Naive thymus-derived CD4-positive, alpha-beta T cell (primary cell): ENCODE measurements at regions of chr5 and their contacts with region 1.

Region 1: DNA sequence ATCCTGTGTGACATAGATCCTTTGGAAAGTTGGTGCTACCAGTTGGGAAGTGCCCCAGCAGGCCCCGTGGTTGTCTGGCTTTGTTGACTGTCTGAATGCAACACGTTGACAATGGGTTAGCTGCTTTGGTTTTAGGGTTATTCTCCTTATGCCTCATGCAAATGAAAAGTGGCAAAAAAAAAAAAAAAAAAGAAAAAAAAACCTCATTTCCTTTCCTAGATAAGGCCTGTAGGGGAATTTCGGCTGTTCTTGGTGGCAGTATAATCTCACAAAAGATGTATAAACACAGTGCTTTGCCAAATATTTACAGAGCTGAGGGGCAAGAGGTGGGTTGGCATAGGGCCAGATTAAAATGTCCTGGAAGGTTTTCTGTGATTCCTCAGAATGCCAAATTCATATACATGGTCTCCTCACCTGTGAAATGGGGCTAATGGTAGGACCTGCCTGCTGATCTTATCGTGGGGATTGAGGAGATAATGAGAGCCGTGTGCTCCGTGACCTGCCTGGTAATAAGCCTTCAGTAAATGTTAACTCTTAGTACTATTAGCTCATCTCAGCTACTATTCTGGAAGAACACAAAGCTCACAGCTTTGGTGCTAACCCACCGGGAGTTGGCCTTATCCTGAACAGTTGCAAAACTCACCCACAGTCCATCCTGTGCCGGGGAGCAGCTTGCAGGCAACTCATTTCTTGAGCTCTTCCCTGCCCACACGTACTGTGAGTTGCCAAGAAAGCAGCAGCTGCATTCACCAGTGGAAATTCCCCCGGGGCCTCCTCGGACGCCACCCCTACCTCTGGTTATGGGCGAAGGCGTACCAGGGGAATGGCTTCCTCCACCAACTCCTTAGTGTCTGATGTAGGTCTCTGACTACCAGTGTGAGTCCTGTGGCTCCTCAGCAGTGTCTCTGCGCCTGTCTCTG is 220.3 kb downstream of the NR3C1 start:
- DNase-seq: peak in 1 of 9 donors; percentile 80
- ATAC-seq: peak; percentile 61
- H3K4me3 ChIP-seq: no peak overlapping the region
- H3K4me3 Mint-ChIP-seq: peak overlapping the region in 1 of 10 donors; percentile 66
- H3K27ac ChIP-seq: no peak overlapping the region
- H3K27ac Mint-ChIP-seq: peak overlapping the region in 1 of 9 donors; percentile 89
- H3K4me1 ChIP-seq: peaks cover 3 to 22% of the 10 kb centered on the region in 2 donors
- H3K4me1 Mint-ChIP-seq: peaks cover 6 to 65% (median 16%) of the 10 kb centered on the region in 7 donors
- H3K27me3 ChIP-seq: no peaks in the 10 kb centered on the region
- H3K27me3 Mint-ChIP-seq: no peaks in the 10 kb centered on the region

Region 2: GRCh38 chr5:143222287-143223231 is 39.4 kb after region 1 on chr5:
- CTCF ChIA-PET with region 1: no interaction called
- POLR2A ChIA-PET with region 1: no interaction called
- intact Hi-C with region 1: loop called in 1 of 2 experiments (anchors 1 kb)
- DNase-seq: peak; percentile 13 to 55 (median 27)
- ATAC-seq: peak; percentile 81
- H3K4me3 ChIP-seq: peak overlapping the region; percentile 7
- H3K4me3 Mint-ChIP-seq: peak overlapping the region; percentile 9 to 80 (median 54)
- H3K27ac ChIP-seq: peak overlapping the region; percentile 40
- H3K27ac Mint-ChIP-seq: peak overlapping the region; percentile 60 to 94 (median 88)
- H3K4me1 ChIP-seq: peaks cover 0 to 30% of the 10 kb centered on the region in 2 donors
- H3K4me1 Mint-ChIP-seq: peaks cover 33 to 76% (median 40%) of the 10 kb centered on the region in 7 donors
- H3K27me3 ChIP-seq: no peaks in the 10 kb centered on the region
- H3K27me3 Mint-ChIP-seq: no peaks in the 10 kb centered on the region